Activated T-helper 1 cell treated with anti-CD3 and anti-CD28 coated beads, Interleukin-12 subunit alpha, Interleukin-12 subunit beta, Interleukin-2, Interleukin-4 antibody, amounts not matched to agents 30 ng/mL and 10 ng/mL and 1 ng/mL, durations not matched to agents 14 hours and 24 hours and 36 hours (primary cell): ENCODE measurements at regions of chr2 and their contacts with region 1.

Region 1: DNA sequence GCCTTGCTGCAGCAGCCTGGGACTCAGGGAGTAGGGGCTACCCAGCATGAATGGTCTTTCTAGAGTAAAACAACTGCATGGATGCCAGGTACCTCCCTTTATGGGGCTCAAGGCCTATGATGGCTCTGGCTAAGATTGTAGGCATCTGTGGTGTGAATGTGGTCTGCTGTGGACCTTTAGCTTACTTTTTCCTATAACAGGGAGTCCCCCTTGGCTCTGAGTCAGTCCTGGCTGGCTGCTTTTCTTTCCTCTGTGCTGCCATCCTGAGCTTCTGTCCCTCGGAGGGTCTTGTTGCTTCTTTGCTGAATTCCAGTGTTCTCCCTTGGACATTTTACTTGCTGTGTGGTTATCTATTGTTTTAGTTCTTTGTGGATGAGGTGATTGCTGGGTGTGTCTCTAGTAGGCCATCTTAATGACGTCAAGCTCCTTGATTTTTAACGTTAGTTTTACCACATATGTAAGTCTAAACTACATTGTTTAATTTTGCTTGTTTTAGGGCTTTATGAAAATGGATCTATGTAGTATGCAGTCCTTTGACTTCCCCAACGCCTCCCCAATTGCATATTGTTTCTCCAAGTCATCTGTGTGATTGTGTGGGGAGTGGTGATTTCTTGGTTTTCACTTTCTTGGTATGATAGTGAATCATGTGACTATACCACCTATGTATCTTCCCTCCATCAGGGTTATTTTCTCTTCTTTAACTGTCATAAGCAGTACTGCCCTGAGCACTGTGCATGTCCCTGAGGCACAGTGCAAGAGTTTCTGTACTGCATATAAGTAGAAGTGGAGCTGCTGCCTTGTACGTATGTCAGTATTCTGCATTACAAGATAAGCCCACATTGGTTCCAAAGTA is 92.4 kb downstream of the NCK2 start:
- DNase-seq: no peak
- H3K4me3 Mint-ChIP-seq: peak overlapping the region; percentile 44
- H3K27ac Mint-ChIP-seq: peak overlapping the region; percentile 61
- H3K4me1 Mint-ChIP-seq: peaks cover 89% of the 10 kb centered on the region
- H3K27me3 Mint-ChIP-seq: no peaks in the 10 kb centered on the region

Region 2: DNA sequence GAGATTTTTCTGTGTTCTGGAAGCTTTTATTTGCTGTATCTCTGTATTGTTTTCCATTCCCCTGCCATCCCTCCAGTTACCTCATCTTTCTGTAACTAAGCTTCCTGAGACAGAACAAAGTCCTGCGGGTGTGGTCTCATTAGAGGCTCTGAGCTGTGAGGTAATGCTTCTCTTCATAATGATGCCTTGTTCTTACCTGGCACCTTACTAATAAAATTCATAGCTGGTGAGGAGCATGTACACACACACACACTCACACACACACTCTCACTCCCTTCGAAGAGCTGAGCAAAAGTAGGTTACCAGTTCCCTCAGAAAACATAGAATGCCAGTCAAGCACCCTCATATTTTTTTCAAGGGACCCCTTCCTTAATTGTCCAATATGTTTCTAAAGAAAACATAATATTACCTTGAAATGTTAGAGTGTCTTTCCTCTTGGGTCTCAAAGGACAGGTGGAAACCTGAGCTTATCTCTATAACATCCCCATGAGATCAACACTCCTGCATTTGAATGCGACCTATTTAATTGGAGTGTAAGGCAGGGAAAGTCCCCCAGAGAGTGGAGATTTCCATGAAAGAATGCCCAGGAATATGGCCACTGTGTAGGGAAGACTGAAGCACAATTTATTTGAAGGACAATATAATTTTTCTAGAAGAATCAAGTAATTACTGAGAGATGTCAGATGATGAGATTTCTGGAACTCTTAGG is 254.0 kb before region 1 on chr2:
- intact Hi-C with region 1: no loop called
- DNase-seq: no peak
- H3K4me3 Mint-ChIP-seq: no peak overlapping the region
- H3K27ac Mint-ChIP-seq: no peak overlapping the region
- H3K4me1 Mint-ChIP-seq: peaks cover 9% of the 10 kb centered on the region
- H3K27me3 Mint-ChIP-seq: peaks cover 2% of the 10 kb centered on the region

Region 3: DNA sequence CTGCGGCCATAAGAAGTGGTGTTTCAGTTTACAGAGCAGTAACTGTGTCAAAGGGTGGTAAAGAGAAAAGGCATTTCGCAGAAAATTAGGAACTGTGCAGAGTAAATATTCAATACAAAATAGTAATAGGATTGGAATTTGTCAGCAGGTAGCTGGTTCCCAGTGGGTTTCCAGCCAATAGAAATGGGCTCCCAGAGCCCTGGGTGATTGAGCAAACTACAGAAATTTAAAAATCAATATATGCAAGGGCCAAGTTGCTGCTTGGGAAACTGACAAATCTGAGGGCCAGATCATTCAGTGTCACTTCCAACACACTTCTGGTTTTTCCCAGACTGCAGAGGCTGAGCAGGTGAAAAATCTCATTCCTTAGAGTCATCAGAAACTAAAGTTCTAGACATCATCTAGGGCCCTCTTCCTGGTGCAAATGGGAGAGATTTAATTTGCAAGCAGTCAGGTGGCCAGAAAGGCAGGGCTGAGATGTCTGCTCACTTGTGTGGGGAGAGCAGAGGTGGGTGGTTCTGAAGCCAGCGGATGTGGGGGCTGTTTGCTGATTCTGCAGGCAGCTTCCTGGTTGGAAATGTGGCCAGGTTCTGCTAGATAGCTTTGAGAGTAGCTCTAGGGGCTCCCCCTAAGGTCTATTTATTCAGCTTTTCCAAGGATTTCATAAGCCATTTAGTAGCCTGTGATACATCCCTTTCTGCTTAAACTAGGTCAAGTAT is 90.1 kb after region 1 on chr2:
- intact Hi-C with region 1: loop called (anchors 2 kb)
- DNase-seq: peak; percentile 49
- H3K4me3 Mint-ChIP-seq: peak overlapping the region; percentile 23
- H3K27ac Mint-ChIP-seq: peak overlapping the region; percentile 85
- H3K4me1 Mint-ChIP-seq: peaks cover 44% of the 10 kb centered on the region
- H3K27me3 Mint-ChIP-seq: no peaks in the 10 kb centered on the region